ENCODE measurements at regions of chr1 and their contacts with region 1.

Region 1: GRCh38 chr1:185681034-185681633 is 53.1 kb upstream of the HMCN1 start:
- DNase-seq: no peak
- H3K4me3 Mint-ChIP-seq: no peak overlapping the region
- H3K27ac Mint-ChIP-seq: no peak overlapping the region
- H3K4me1 Mint-ChIP-seq: peaks cover 23% of the 10 kb centered on the region
- H3K27me3 Mint-ChIP-seq: peaks cover 2% of the 10 kb centered on the region

Region 2: GRCh38 chr1:184982002-184982954 is 698.9 kb before region 1 on chr1:
- CTCF ChIA-PET with region 1: interaction called, 7 read pairs
- POLR2A ChIA-PET with region 1: no interaction called
- intact Hi-C with region 1: loop called (anchors 5 kb)
- DNase-seq: peak; percentile 85
- H3K4me3 Mint-ChIP-seq: no peak overlapping the region
- H3K27ac Mint-ChIP-seq: no peak overlapping the region
- H3K4me1 Mint-ChIP-seq: no peaks in the 10 kb centered on the region
- H3K27me3 Mint-ChIP-seq: peaks cover 4% of the 10 kb centered on the region

Region 3: GRCh38 chr1:185170291-185170848 is 510.8 kb before region 1 on chr1:
- CTCF ChIA-PET with region 1: interaction called, 8 read pairs
- POLR2A ChIA-PET with region 1: no interaction called
- intact Hi-C with region 1: loop called (anchors 5 kb)
- DNase-seq: peak; percentile 33
- H3K4me3 Mint-ChIP-seq: no peak overlapping the region
- H3K27ac Mint-ChIP-seq: no peak overlapping the region
- H3K4me1 Mint-ChIP-seq: peaks cover 5% of the 10 kb centered on the region
- H3K27me3 Mint-ChIP-seq: no peaks in the 10 kb centered on the region

Region 4: DNA sequence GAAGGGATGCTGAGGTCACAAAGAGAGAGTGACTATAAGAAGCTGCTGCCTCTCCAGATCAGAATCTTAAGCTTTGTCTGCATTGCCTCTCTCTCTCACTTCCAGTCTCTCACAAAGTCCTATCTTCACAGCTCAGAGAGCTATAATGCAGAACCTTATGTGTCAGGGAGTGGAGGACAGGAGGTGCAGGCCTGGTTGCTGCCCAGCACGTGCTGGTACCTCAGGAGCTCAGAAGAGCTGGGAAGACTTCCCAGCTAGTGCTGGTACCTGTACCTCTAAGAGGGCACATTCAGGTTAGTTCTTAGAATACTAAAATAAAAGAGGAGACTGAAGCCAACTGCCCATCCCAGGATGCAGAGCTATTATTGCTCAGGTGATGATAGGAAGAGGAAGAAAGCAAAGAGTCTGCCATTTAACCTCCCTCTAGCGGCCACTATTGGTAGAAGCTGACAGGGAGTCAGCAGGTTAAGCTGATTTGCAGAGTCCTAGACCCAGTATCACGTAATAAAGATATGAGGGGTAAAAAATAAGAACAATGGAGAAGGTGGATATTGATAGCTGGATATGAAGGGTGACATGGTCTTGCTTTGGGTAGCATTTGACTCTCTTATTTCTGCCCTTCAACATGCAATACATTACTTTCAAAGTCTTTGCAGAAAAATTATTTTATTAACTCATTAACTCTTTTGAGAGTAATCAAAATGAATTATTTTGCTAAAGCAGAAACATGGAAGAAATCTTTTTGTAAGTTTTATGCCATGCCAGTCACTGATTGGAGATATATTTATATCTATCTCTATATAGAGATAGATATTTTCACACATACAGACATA is 85.1 kb before region 1 on chr1:
- CTCF ChIA-PET with region 1: interaction called, 12 read pairs
- POLR2A ChIA-PET with region 1: no interaction called
- intact Hi-C with region 1: no loop called
- DNase-seq: peak; percentile 55
- H3K4me3 Mint-ChIP-seq: no peak overlapping the region
- H3K27ac Mint-ChIP-seq: no peak overlapping the region
- H3K4me1 Mint-ChIP-seq: peaks cover 23% of the 10 kb centered on the region
- H3K27me3 Mint-ChIP-seq: no peaks in the 10 kb centered on the region

Region 5: DNA sequence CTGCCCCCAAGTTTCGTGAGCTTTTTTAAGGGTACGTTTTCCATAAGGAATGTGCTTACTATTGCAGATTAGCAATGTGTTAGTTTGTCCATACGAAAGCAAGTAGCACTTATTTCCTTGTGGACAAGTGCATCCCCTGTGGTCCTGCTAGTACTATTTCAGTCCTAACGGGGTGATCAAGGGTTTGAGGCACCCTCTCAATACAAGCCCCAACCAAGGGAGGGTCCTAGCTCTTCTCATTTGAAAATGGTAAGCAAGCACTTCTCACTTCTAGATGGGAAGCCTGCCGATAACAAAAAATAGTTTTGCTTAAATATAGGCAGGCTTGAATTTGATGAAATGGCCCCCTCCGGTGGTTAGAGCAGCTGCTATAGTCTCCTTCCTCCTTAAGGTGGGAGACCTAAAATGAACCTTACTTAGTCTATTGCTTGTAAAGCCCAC is 10.9 kb before region 1 on chr1:
- CTCF ChIA-PET with region 1: interaction called, 20 read pairs
- POLR2A ChIA-PET with region 1: no interaction called
- intact Hi-C with region 1: no loop called
- DNase-seq: peak; percentile 57
- H3K4me3 Mint-ChIP-seq: no peak overlapping the region
- H3K27ac Mint-ChIP-seq: no peak overlapping the region
- H3K4me1 Mint-ChIP-seq: peaks cover 15% of the 10 kb centered on the region
- H3K27me3 Mint-ChIP-seq: no peaks in the 10 kb centered on the region

Region 6: DNA sequence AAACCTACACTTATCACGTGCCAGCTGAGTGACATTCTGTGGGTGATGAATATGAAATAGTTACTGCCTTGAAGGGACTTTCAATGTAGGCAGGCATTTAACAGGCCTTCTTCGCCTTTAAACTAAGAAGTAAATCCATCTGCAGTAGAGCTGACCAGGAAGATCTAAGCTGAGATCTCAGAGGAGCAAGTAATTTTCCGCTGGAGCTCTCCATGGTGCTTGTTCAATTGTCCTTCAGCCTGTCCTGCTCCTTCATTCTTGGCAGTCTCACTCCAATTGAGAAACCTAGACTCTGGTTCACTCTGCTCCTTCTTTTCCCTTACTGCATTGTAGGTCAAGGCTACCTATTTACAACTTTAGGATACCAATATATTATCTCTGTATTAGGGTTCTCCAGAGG is 236.5 kb after region 1 on chr1:
- CTCF ChIA-PET with region 1: no interaction called
- POLR2A ChIA-PET with region 1: no interaction called
- intact Hi-C with region 1: no loop called
- DNase-seq: no peak
- H3K4me3 Mint-ChIP-seq: no peak overlapping the region
- H3K27ac Mint-ChIP-seq: no peak overlapping the region
- H3K4me1 Mint-ChIP-seq: no peaks in the 10 kb centered on the region
- H3K27me3 Mint-ChIP-seq: peaks cover 1% of the 10 kb centered on the region

Measured in activated CD4-positive, alpha-beta memory T cell treated with anti-CD3 and anti-CD28 coated beads for 36 hours (primary cell).